Posterior cingulate gyrus (tissue), 11 donors: ENCODE measurements at regions of chr2 and their contacts with region 1.

Region 1: GRCh38 chr2:173965329-173966025 is at the start of gene SP3:
- DNase-seq: peak; percentile 94 to 99 (median 96)

Region 2: DNA sequence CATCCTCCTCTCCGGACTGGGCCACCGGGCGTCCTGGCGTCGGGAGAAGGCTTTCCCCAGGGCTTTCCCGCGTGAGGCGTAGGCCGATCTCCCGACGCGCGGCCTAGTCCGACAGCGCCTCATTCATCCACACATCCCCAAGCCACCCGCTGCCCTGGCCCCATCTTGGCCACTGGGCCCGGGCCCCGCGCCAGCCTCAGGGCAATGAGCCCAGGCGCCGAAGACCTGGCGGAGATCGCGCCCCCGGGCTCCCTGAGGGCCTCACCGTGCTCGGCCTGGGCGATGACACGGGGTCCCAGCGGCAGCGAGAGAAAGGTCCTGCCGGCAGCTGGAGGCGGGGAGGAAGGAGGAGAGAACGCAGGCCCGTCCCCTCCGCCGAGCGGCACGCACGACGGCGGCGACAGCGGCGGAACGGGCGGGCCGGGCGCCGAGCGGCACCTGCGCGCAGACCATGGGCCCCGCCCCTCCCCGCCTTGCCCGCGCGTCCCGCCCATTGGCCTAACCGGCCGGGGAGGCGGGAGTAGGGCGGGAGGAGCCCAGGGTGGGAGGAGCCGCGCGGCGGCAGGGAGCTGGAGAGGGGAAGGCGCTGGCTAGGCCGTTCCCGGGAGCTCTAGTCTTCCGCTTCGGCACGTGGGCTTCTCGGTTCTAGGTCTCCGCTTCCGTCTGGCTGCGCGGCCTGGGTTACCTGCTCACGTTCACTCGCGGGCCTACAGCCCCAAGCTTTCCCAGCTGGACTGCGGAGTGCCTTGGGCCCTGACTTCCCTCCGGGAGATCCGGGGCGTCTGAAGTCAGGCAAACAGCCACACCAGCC is 282.9 kb after region 1 on chr2 and contains the start of gene OLA1:
- intact Hi-C with region 1: loop called (anchors 2 kb)
- DNase-seq: peak; percentile 85 to 99 (median 93)